PC-3 (cell line): ENCODE measurements at regions of chr6 and their contacts with region 1.

Region 1: DNA sequence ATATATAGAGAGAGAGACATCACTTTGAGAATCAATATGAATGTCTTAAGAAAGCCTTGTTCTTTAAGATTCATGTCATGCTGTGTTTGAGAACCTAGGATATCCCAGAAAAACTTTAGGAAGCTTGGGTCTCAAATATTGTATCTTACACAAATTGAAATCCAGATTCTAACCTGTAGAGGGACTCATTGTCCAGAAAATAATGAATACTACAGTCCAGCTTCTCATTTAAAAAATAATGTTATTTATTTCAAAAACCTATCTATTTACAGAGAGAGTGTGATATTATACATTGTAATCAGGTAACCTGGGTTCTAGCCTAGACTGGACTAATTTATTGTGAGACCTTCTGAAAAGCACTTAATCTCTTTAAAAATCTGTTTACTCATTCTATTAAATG is 4.2 kb downstream of the RFX6 start:
- DNase-seq: peak; percentile 53
- ATAC-seq: peak; percentile 37; the same call in 1 of the 2 replicates
- H3K4me3 ChIP-seq: no peak overlapping the region
- H3K27ac ChIP-seq: no peak overlapping the region
- H3K4me1 ChIP-seq: peaks cover 20% of the 10 kb centered on the region
- H3K27me3 ChIP-seq: peaks cover 13% of the 10 kb centered on the region
- CTCF ChIP-seq: peak; percentile 65

Region 2: GRCh38 chr6:116836606-116837342 is 44.5 kb before region 1 on chr6:
- CTCF ChIA-PET with region 1: no interaction called
- POLR2A ChIA-PET with region 1: no interaction called
- intact Hi-C with region 1: no loop called
- DNase-seq: no peak
- ATAC-seq: no peak
- H3K4me3 ChIP-seq: no peak overlapping the region
- H3K27ac ChIP-seq: no peak overlapping the region
- H3K4me1 ChIP-seq: no peaks in the 10 kb centered on the region
- H3K27me3 ChIP-seq: no peaks in the 10 kb centered on the region
- CTCF ChIP-seq: no peak

Region 3: GRCh38 chr6:116859264-116859663 is 22.0 kb before region 1 on chr6:
- CTCF ChIA-PET with region 1: no interaction called
- POLR2A ChIA-PET with region 1: no interaction called
- intact Hi-C with region 1: no loop called
- DNase-seq: no peak
- ATAC-seq: no peak
- H3K4me3 ChIP-seq: no peak overlapping the region
- H3K27ac ChIP-seq: no peak overlapping the region
- H3K4me1 ChIP-seq: no peaks in the 10 kb centered on the region
- H3K27me3 ChIP-seq: no peaks in the 10 kb centered on the region
- CTCF ChIP-seq: no peak

Region 4: GRCh38 chr6:116941727-116942126 is 60.5 kb after region 1 on chr6:
- CTCF ChIA-PET with region 1: no interaction called
- POLR2A ChIA-PET with region 1: interaction called, 3 read pairs
- intact Hi-C with region 1: loop called (anchors 1 kb)
- DNase-seq: peak; percentile 34
- ATAC-seq: peak; percentile 53; the same call in 1 of the 2 replicates
- H3K4me3 ChIP-seq: no peak overlapping the region
- H3K27ac ChIP-seq: no peak overlapping the region
- H3K4me1 ChIP-seq: peaks cover 20% of the 10 kb centered on the region
- H3K27me3 ChIP-seq: no peaks in the 10 kb centered on the region
- CTCF ChIP-seq: peak; percentile 59

Region 5: DNA sequence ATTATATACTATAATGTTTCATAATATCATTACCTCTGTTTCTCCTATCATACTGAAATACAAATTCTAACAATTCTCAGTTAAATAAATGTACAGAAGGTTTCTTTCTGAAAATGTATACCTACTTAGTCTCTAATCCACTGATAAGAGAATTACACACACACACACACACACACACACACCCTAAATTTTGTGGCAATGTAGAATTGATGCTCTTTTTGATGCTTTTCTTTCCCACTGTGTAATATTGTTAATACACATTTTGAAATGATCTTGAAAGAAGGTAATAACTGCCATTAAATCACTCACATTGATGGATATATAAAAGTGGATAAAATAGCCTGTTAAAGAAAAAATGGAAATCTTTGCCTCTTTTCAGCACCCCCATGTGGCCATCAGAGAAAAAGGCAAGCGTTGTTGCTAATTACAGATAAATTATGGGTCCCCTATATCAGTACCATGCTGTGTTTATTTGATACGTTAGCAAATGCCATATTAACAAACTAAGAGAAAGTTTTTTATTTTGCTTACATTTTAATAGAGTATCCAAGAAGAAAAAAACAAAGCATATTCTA is 307.5 kb after region 1 on chr6:
- CTCF ChIA-PET with region 1: no interaction called
- POLR2A ChIA-PET with region 1: no interaction called
- intact Hi-C with region 1: loop called (anchors 5 kb)
- DNase-seq: peak; percentile 28
- ATAC-seq: peak; percentile 24; the same call in 1 of the 2 replicates
- H3K4me3 ChIP-seq: no peak overlapping the region
- H3K27ac ChIP-seq: no peak overlapping the region
- H3K4me1 ChIP-seq: no peaks in the 10 kb centered on the region
- H3K27me3 ChIP-seq: no peaks in the 10 kb centered on the region
- CTCF ChIP-seq: peak; percentile 73

Region 6: GRCh38 chr6:117359581-117359980 is 478.3 kb after region 1 on chr6:
- CTCF ChIA-PET with region 1: no interaction called
- POLR2A ChIA-PET with region 1: no interaction called
- intact Hi-C with region 1: no loop called
- DNase-seq: no peak
- ATAC-seq: no peak
- H3K4me3 ChIP-seq: no peak overlapping the region
- H3K27ac ChIP-seq: no peak overlapping the region
- H3K4me1 ChIP-seq: no peaks in the 10 kb centered on the region
- H3K27me3 ChIP-seq: no peaks in the 10 kb centered on the region
- CTCF ChIP-seq: no peak